ENCODE measurements at regions of chr1 and their contacts with region 1.

Region 1: GRCh38 chr1:19811206-19811851 is 3.8 kb downstream of the RNF186 start:
- DNase-seq: peak in 1 of 5 donors; percentile 35
- ATAC-seq: peak in 1 of 4 donors; percentile 36
- H3K4me3 ChIP-seq: no peak overlapping the region
- H3K27ac ChIP-seq: no peak overlapping the region
- H3K4me1 ChIP-seq: no peaks in the 10 kb centered on the region
- H3K27me3 ChIP-seq: no peaks in the 10 kb centered on the region
- CTCF ChIP-seq: peak in 10 of 12 donors; percentile 16 to 52 (median 40)
- POLR2A ChIP-seq: no peak

Region 2: GRCh38 chr1:19715334-19716203 is 95.8 kb before region 1 on chr1:
- intact Hi-C with region 1: loop called in 1 of 10 experiments (anchors 5 kb)
- DNase-seq: peak; percentile 73 to 92 (median 86)
- ATAC-seq: peak; percentile 56 to 96 (median 92)
- H3K4me3 ChIP-seq: no peak overlapping the region
- H3K27ac ChIP-seq: no peak overlapping the region
- H3K4me1 ChIP-seq: no peaks in the 10 kb centered on the region
- H3K27me3 ChIP-seq: no peaks in the 10 kb centered on the region
- CTCF ChIP-seq: peak; percentile 58 to 84 (median 74)
- POLR2A ChIP-seq: no peak

Region 3: GRCh38 chr1:19872190-19872589 is 60.9 kb after region 1 on chr1:
- intact Hi-C with region 1: no loop called
- DNase-seq: no peak
- ATAC-seq: no peak
- H3K4me3 ChIP-seq: no peak overlapping the region
- H3K27ac ChIP-seq: no peak overlapping the region
- H3K4me1 ChIP-seq: no peaks in the 10 kb centered on the region
- H3K27me3 ChIP-seq: peaks cover 0 to 54% (median 9%) of the 10 kb centered on the region in 9 donors
- CTCF ChIP-seq: no peak
- POLR2A ChIP-seq: no peak